Ascending aorta (tissue), 2 donors: ENCODE measurements at regions of chr2 and their contacts with region 1.

Region 1: DNA sequence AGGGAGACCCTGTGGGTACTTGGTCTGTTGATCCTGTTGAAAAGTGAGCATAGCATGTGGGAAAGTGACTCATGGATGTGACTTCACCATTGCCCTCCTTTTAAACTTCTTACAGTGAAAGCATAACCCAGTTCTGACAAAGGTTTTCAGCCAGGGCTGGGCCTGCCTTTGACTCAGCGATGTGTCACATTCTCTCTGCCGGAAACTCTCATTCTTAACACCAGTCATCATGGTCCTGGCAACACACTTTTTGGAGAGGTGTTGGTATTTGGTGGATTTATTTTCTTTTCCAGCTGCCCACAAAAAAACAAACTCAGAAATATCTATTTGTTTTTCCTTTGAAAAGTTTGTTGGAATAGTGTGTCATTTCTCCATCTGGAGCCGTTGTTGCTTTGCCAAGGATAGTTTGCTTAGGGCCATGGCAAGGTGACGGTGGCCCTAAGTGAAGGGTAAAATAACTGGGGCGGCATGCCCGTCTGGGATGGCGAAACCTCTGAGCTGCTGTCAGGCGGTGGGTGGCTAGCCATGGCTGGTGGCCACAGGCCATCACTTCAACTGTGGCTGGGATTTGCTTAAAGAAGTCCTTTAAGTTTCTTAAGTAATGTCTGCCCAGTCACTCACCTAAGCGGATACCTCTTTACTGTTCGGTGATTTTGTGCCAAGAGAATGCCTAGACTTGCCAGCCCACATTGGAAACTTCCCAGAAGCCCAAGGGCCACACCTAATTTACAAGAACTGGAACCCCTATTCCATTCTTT is 123.3 kb downstream of the LTBP1 start:
- DNase-seq: peak; percentile 67 to 96
- H3K4me3 ChIP-seq: no peak overlapping the region
- H3K27ac ChIP-seq: peak overlapping the region; percentile 83 to 86
- H3K4me1 ChIP-seq: peaks cover 10 to 40% of the 10 kb centered on the region in 2 donors
- H3K27me3 ChIP-seq: no peaks in the 10 kb centered on the region
- CTCF ChIP-seq: no peak

Region 2: DNA sequence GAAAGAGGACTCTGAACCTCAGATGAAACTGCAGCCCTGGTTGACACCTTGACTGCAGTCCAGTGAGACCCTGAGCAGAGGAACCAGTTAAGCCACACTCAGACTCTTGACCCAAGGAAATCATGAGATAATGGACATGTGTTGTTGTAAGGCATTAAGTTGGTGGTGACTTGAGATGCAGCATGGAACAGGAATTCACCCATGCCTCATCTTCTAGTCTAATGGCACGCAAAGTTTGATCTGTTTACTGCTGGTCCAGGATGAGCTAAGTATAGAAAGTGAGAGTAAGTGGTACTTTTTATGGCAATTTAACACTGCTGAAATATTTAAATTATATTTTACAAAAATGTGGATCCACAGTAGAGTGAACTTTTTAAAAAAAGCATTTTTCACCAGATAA is 174.6 kb before region 1 on chr2:
- intact Hi-C with region 1: no loop called
- DNase-seq: no peak
- H3K4me3 ChIP-seq: no peak overlapping the region
- H3K27ac ChIP-seq: no peak overlapping the region
- H3K4me1 ChIP-seq: no peaks in the 10 kb centered on the region
- H3K27me3 ChIP-seq: no peaks in the 10 kb centered on the region
- CTCF ChIP-seq: no peak

Region 3: DNA sequence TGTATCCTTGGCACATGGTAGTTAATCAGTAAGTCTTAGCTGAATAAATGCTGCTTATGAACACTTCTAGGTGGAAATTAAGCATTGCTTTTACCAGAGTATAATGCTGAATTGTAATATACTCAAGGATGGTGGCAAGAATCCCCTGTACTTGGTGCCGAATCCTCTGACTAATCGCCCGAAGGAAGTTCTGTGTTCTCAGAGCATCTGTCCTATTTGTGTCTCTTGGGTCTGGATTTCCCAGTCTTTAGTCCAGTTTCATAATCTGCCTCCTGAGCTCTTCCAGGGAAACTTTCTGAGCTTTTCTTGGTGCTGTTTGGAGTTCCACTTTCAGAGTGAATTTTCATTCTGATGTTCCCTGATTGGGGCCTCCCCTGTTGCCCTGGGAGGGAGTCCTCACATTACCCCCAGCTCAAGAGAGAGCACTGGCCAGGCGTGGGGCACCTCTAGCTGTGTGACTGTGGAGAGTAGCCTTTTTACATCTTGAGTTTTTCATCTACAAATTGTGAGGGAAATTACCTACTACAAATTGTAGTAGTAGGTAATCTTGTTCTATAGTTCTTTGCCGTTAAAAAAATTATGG is 21.6 kb after region 1 on chr2:
- intact Hi-C with region 1: loop called (anchors 2 kb)
- DNase-seq: no peak
- H3K4me3 ChIP-seq: no peak overlapping the region
- H3K27ac ChIP-seq: peak overlapping the region; percentile 77 to 79
- H3K4me1 ChIP-seq: peaks cover 0 to 15% of the 10 kb centered on the region in 2 donors
- H3K27me3 ChIP-seq: no peaks in the 10 kb centered on the region
- CTCF ChIP-seq: no peak

Region 4: DNA sequence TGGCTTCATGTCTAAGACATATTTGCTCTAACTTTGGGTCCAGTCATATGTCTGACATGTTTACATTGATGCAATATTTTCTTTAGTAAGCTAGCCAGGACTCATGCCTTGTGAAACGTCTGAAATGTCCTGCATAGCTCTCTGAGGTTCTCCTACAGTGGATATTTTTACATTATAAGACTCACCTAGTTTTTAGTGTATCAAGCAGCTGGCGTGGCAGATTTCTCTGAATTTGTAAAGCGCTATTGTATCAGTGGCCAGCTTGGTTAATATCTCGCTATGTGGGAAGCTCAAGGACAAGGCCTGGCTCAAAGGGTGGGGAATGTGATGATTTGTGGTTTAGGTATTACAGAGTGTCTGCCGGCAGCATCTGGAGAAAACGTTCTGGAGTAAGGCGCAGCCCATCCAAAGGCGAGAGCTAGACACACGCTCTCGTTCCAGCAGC is 41.0 kb after region 1 on chr2:
- intact Hi-C with region 1: loop called (anchors 2 kb)
- DNase-seq: no peak
- H3K4me3 ChIP-seq: no peak overlapping the region
- H3K27ac ChIP-seq: peak overlapping the region; percentile 61 to 72
- H3K4me1 ChIP-seq: peaks cover 0 to 48% of the 10 kb centered on the region in 2 donors
- H3K27me3 ChIP-seq: no peaks in the 10 kb centered on the region
- CTCF ChIP-seq: no peak

Region 5: DNA sequence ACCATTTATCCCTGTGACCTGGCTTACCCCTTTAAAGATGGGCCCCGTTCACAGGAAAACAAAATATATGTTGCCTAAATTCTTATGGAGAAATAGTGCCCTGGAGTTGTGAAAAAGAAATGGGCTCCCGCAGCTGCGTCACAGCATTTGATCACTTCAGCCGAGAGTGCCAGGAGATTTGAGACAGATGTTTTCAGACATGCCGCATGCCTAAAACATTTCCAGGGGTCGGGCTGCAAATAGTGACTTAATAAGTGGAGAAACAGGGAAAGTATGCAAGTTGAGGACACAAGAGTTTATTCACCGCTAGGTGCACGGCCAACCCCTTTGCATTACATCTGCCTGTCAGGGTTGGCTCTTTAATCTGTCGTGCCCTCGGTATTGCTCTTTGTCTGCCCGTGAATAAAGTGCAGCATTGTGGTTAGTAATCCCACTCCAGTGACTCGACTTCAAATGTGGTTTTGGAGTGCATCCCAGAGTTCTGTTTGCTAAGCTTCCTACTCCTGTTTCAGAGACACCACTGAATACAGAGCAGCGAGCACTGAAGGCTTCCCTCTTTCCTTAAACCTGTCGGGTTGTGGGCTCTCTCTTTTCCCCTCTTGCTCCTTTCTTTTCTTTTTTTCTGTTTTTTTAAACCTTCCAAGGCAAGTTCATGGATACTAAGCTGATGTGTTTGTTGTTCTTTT is 64.2 kb after region 1 on chr2:
- intact Hi-C with region 1: loop called (anchors 2 kb)
- DNase-seq: peak in 1 of 2 donors; percentile 93
- H3K4me3 ChIP-seq: peak overlapping the region; percentile 62 to 73
- H3K27ac ChIP-seq: peak overlapping the region; percentile 88 to 92
- H3K4me1 ChIP-seq: peaks cover 6 to 38% of the 10 kb centered on the region in 2 donors
- H3K27me3 ChIP-seq: no peaks in the 10 kb centered on the region
- CTCF ChIP-seq: peak in 1 of 3 experiments; percentile 17

Region 6: GRCh38 chr2:33291278-33292013 is 221.4 kb after region 1 on chr2:
- intact Hi-C with region 1: loop called (anchors 5 kb)
- DNase-seq: no peak
- H3K4me3 ChIP-seq: peak overlapping the region in 1 of 2 donors; percentile 39
- H3K27ac ChIP-seq: peak overlapping the region; percentile 86 to 88
- H3K4me1 ChIP-seq: peaks cover 28 to 40% of the 10 kb centered on the region in 2 donors
- H3K27me3 ChIP-seq: no peaks in the 10 kb centered on the region
- CTCF ChIP-seq: no peak

Region 7: GRCh38 chr2:33372940-33373553 is 303.0 kb after region 1 on chr2:
- intact Hi-C with region 1: loop called (anchors 10 kb)
- DNase-seq: no peak
- H3K4me3 ChIP-seq: no peak overlapping the region
- H3K27ac ChIP-seq: peak overlapping the region in 1 of 2 donors; percentile 26
- H3K4me1 ChIP-seq: peaks cover 0 to 13% of the 10 kb centered on the region in 2 donors
- H3K27me3 ChIP-seq: no peaks in the 10 kb centered on the region
- CTCF ChIP-seq: peak; percentile 44 to 74 (median 65)